Transverse colon (tissue), 4 donors: ENCODE measurements at regions of chr5 and their contacts with region 1.

Region 1: DNA sequence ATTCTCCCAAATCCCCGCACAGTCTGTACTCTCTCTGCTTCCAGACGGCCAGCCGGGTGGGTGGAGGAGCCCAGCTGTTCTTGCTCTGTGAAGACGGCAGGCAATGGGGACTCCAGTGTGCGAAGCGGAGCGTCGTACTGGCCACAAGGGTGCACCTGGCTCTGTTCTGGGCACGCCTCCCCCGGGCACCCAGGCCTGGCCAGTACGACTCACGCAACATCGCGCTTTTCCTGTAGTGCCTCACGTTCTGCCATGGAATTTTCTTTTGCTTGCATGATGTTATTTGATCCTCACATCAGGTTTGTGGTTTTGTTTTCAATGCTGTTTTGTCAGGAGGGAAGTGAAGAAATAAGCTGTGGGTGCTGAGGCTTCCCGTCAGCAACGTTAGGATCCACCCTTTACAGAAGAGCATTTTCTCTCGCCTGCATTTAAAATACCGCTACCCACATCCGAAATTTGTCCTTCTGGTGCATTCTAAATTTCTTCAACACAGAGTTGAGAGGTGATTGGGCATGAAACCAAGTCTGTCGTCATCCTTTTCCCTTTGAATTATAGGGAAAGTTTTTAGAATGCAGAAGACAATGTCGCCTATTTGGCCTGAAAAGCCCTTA is 311.7 kb downstream of the TRIM36 start:
- DNase-seq: no peak
- H3K4me3 ChIP-seq: no peak overlapping the region
- H3K27ac ChIP-seq: no peak overlapping the region
- H3K4me1 ChIP-seq: no peaks in the 10 kb centered on the region
- H3K27me3 ChIP-seq: no peaks in the 10 kb centered on the region
- CTCF ChIP-seq: no peak
- EP300 ChIP-seq: no peak
- POLR2A ChIP-seq: no peak

Region 2: GRCh38 chr5:114912189-114912920 is 54.3 kb after region 1 on chr5:
- in situ Hi-C with region 1: no loop called
- intact Hi-C with region 1: loop called (anchors 2 kb)
- DNase-seq: no peak
- H3K4me3 ChIP-seq: no peak overlapping the region
- H3K27ac ChIP-seq: no peak overlapping the region
- H3K4me1 ChIP-seq: no peaks in the 10 kb centered on the region
- H3K27me3 ChIP-seq: no peaks in the 10 kb centered on the region
- CTCF ChIP-seq: no peak
- EP300 ChIP-seq: no peak
- POLR2A ChIP-seq: no peak